Prostate gland (tissue), 2 donors: ENCODE measurements at regions of chr12 and their contacts with region 1.

Region 1: DNA sequence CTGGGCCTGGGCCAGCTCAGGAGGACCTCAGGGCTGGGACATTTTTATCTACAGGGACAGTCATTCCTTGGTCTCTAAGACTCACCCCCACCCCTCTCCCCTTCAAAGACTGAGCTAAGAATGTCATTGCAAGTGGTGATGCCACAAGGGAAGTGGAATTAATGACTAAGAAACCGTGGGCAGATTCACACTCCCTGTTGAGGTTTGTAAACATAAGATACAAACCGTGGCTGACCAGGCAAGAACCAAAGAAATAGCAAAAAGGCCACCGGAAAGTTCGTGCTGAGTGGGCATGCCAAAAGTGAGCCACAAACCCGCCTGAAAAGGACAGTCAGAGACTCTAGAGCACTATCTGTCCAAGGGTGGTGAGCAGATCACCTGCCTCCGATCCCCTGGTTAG is 25.7 kb downstream of the NUAK1 start:
- DNase-seq: no peak
- H3K4me3 ChIP-seq: no peak overlapping the region
- H3K27ac ChIP-seq: peak overlapping the region; percentile 8 to 50
- H3K4me1 ChIP-seq: no peaks in the 10 kb centered on the region
- H3K27me3 ChIP-seq: no peaks in the 10 kb centered on the region
- CTCF ChIP-seq: no peak
- POLR2A ChIP-seq: no peak

Region 2: GRCh38 chr12:105922670-105923102 is 190.4 kb before region 1 on chr12:
- intact Hi-C with region 1: no loop called
- DNase-seq: no peak
- H3K4me3 ChIP-seq: no peak overlapping the region
- H3K27ac ChIP-seq: no peak overlapping the region
- H3K4me1 ChIP-seq: no peaks in the 10 kb centered on the region
- H3K27me3 ChIP-seq: no peaks in the 10 kb centered on the region
- CTCF ChIP-seq: no peak
- POLR2A ChIP-seq: no peak

Region 3: GRCh38 chr12:106078358-106079010 is 34.6 kb before region 1 on chr12:
- intact Hi-C with region 1: loop called (anchors 5 kb)
- DNase-seq: no peak
- H3K4me3 ChIP-seq: no peak overlapping the region
- H3K27ac ChIP-seq: no peak overlapping the region
- H3K4me1 ChIP-seq: no peaks in the 10 kb centered on the region
- H3K27me3 ChIP-seq: no peaks in the 10 kb centered on the region
- CTCF ChIP-seq: no peak
- POLR2A ChIP-seq: no peak

Region 4: GRCh38 chr12:106157802-106158201 is 44.8 kb after region 1 on chr12:
- intact Hi-C with region 1: no loop called
- DNase-seq: no peak
- H3K4me3 ChIP-seq: no peak overlapping the region
- H3K27ac ChIP-seq: no peak overlapping the region
- H3K4me1 ChIP-seq: no peaks in the 10 kb centered on the region
- H3K27me3 ChIP-seq: no peaks in the 10 kb centered on the region
- CTCF ChIP-seq: no peak
- POLR2A ChIP-seq: no peak

Region 5: DNA sequence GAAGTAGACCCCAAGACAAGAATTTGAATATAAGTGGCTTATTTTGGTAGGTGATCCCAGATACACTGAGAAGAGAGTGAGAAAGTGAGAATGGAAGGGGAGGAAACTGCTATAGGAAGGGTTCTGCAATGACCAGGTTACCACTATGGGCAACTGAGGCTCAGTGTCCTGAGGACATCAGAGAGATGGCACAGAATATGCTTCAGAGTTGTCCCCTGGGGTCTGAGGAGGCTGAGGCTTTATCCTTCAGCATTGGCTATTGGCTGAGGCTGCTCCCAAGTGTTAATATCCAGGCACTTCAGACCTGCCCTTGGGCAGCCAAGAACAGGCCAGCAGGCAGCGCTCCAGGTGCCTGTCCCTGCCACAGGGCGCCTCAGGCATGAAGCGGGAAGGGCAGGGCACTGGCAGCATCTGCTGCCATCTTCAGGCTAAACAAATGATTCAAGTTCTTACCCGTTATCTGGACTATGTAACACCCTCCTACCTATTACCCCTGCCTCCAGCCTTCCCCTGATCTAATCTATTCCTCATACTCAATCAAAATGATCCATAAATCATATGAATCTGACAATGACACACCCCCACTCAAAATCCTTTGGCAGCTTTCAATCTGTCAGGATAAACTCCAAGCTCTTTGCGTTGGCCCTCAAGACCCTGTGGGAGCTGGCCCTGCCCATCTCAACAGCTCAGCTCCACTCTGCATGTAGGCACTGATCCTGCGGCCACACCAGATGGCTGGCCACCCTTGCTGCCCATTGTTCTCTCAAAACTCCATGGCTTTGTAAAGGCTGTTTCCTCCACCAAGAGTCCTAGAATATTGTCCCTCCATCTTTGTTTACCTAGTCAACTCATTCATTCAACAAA is 92.4 kb after region 1 on chr12:
- intact Hi-C with region 1: no loop called
- DNase-seq: no peak
- H3K4me3 ChIP-seq: no peak overlapping the region
- H3K27ac ChIP-seq: no peak overlapping the region
- H3K4me1 ChIP-seq: no peaks in the 10 kb centered on the region
- H3K27me3 ChIP-seq: no peaks in the 10 kb centered on the region
- CTCF ChIP-seq: peak in 2 of 4 experiments; percentile 25 to 39
- POLR2A ChIP-seq: no peak